ENCODE measurements at regions of chr9 and their contacts with region 1.

Region 1: DNA sequence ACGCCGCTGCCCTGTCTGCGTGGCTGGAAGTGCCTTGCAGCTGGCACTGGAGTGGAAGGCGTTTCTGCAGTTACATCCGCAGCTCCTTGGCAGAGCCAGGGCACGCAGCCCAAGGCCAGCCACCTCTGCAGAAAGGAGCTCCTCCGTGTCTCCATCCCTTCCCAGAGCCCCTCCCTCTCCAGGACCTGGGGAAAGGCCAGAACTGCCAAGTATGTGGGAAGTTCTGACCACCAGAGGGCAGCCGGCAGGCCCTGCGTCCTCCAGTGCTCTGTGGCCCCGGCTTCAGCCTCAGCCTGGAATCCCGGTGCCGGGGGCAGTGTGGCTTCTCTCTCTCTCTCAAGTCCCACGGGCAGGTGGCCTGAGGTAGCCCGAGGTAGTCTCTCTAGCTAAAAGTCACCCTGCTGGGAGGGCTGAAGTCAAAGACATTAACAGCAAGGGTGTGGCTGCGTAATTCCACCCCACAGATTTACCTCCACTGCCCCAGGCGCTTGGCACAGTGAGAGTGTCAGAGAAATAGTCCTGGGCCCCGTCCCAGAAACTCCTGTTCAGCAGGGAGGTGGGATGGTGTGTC is 101.7 kb upstream of the FCN2 start:
- DNase-seq: no peak
- H3K4me3 ChIP-seq: no peak overlapping the region
- H3K27ac ChIP-seq: no peak overlapping the region
- H3K27me3 ChIP-seq: no peaks in the 10 kb centered on the region
- CTCF ChIP-seq: peak; percentile 72

Region 2: DNA sequence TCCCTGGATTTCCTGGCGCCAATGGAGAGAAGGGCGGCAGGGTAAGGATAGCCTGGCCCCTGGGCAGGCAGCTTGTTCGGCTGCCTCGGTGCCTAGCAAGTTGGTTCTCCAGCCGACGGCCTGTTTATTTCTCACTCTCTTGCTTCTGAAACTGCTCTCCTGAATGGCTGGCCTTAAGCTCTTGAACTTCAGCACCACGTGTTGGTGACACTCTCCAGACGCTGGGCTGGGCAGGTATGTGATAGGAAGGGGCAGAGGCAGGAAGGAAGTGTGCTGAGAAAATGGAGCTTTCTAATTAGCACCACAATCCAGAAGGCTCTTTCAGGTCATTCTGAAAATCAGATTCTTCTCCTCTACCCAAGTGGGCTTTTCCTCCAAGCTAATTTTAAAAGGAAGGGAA is 10.2 kb after region 1 on chr9:
- CTCF ChIA-PET with region 1: interaction called, 12 read pairs
- POLR2A ChIA-PET with region 1: interaction called, 3 read pairs
- DNase-seq: no peak
- H3K4me3 ChIP-seq: no peak overlapping the region
- H3K27ac ChIP-seq: no peak overlapping the region
- H3K27me3 ChIP-seq: no peaks in the 10 kb centered on the region
- CTCF ChIP-seq: no peak

Region 3: GRCh38 chr9:135478858-135479468 is 700.0 kb after region 1 on chr9:
- CTCF ChIA-PET with region 1: no interaction called
- POLR2A ChIA-PET with region 1: no interaction called
- DNase-seq: no peak
- H3K4me3 ChIP-seq: peak overlapping the region; percentile 46
- H3K27ac ChIP-seq: no peak overlapping the region
- H3K27me3 ChIP-seq: peaks cover 2% of the 10 kb centered on the region
- CTCF ChIP-seq: peak; percentile 13; the same call in 1 of the 2 replicates

Measured in AG04450 (cell line).